ENCODE measurements at regions of chr2 and their contacts with region 1.

Region 1: DNA sequence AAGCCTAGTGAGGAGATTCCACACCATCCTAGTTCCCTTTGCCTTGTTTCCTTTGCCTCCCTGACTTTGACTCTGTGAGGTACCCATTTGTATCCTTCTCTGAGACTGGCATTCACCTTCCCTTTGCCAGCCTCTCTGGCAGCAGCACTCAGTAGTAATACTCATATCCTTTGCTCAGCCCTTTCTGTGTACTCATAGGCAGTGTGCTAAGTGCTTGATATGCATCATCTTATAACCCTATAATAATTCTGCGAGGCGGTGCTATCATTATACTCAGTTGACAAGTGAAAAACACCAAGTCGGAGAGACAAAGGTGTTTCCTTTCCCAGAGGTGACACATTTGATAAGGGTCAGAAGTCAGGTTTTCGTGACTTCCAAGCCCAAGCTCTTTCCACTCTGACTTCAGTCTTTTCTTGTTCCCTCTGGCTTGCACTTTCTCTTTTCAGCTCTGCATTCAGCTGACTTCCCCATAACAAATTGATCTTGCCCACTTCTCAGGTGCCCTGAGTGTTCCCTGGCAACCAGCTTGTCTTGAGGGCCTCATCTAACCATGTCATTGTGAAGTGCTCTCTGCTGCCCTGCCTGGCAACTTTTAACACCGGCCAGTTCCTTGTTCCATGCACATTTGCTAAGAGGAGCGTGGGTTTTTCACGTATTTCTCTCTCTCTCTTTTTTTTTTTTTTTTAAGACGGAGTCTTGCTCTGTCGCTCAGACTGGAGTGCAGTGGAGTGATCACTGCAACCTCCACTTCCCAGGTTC is 94.5 kb upstream of the UPP2 start:
- DNase-seq: no peak
- H3K4me3 Mint-ChIP-seq: no peak overlapping the region
- H3K27ac Mint-ChIP-seq: no peak overlapping the region
- H3K4me1 Mint-ChIP-seq: peaks cover 26% of the 10 kb centered on the region
- H3K27me3 Mint-ChIP-seq: no peaks in the 10 kb centered on the region
- CTCF ChIP-seq: no peak

Region 2: DNA sequence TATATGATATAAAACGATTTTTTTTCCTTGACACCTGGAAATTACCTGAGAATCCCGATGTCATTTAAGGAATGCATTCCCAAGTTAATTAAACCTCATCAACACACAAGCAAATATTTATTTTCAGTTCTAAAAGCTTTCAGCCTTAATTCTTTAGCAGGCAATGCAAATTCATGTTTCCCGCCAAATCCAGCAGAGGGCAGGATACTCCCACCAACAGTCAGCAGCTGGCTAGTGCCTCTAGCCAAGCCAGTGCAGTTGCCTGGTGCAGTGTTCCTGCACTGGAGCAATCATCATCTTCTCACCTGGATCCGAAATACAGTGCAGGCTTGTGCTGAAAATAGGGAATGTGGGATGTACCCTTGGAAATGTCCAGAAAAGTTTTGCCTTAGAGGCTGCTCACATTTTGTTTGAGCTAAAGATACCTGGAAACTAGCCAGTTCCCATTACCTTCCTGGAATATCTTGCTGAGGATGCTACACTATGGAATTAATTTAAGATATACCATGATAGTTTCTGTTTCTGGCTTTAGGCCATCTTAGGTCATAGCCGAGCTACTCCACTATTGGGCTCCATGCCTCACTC is 514.9 kb before region 1 on chr2:
- CTCF ChIA-PET with region 1: interaction called, 5 read pairs
- intact Hi-C with region 1: loop called (anchors 1 kb)
- DNase-seq: peak; percentile 76
- H3K4me3 Mint-ChIP-seq: no peak overlapping the region
- H3K27ac Mint-ChIP-seq: no peak overlapping the region
- H3K4me1 Mint-ChIP-seq: peaks cover 27% of the 10 kb centered on the region
- H3K27me3 Mint-ChIP-seq: peaks cover 13% of the 10 kb centered on the region
- CTCF ChIP-seq: peak; percentile 49

Region 3: GRCh38 chr2:157596992-157597681 is 410.0 kb before region 1 on chr2:
- CTCF ChIA-PET with region 1: no interaction called
- intact Hi-C with region 1: loop called (anchors 10 kb)
- DNase-seq: peak; percentile 73
- H3K4me3 Mint-ChIP-seq: peak overlapping the region; percentile 58
- H3K27ac Mint-ChIP-seq: no peak overlapping the region
- H3K4me1 Mint-ChIP-seq: no peaks in the 10 kb centered on the region
- H3K27me3 Mint-ChIP-seq: peaks cover 15% of the 10 kb centered on the region
- CTCF ChIP-seq: no peak

Region 4: GRCh38 chr2:157777427-157777826 is 229.7 kb before region 1 on chr2:
- CTCF ChIA-PET with region 1: interaction called, 3 read pairs
- intact Hi-C with region 1: loop called (anchors 1 kb)
- DNase-seq: peak; percentile 68
- H3K4me3 Mint-ChIP-seq: no peak overlapping the region
- H3K27ac Mint-ChIP-seq: no peak overlapping the region
- H3K4me1 Mint-ChIP-seq: peaks cover 14% of the 10 kb centered on the region
- H3K27me3 Mint-ChIP-seq: no peaks in the 10 kb centered on the region
- CTCF ChIP-seq: peak; percentile 35

Region 5: DNA sequence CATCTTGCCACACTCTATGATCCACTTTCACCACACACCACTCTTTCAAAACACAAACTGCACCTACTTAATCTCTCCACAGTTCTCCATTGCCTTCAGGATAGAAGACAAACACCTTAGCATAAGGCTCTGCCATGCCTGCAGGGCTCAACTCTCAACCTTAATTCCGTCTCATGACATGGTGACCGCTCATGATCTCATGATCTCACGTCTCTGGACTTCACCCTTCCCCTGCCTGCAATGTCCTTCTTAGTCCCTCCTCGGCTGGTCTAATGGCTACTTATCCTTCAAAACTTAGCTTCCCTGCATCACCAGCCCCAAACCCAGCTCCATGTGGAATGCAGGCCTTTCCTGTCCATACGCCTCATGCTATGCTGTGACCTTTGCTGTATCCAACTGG is 216.4 kb before region 1 on chr2:
- CTCF ChIA-PET with region 1: no interaction called
- intact Hi-C with region 1: no loop called
- DNase-seq: no peak
- H3K4me3 Mint-ChIP-seq: no peak overlapping the region
- H3K27ac Mint-ChIP-seq: no peak overlapping the region
- H3K4me1 Mint-ChIP-seq: peaks cover 41% of the 10 kb centered on the region
- H3K27me3 Mint-ChIP-seq: no peaks in the 10 kb centered on the region
- CTCF ChIP-seq: no peak

Region 6: DNA sequence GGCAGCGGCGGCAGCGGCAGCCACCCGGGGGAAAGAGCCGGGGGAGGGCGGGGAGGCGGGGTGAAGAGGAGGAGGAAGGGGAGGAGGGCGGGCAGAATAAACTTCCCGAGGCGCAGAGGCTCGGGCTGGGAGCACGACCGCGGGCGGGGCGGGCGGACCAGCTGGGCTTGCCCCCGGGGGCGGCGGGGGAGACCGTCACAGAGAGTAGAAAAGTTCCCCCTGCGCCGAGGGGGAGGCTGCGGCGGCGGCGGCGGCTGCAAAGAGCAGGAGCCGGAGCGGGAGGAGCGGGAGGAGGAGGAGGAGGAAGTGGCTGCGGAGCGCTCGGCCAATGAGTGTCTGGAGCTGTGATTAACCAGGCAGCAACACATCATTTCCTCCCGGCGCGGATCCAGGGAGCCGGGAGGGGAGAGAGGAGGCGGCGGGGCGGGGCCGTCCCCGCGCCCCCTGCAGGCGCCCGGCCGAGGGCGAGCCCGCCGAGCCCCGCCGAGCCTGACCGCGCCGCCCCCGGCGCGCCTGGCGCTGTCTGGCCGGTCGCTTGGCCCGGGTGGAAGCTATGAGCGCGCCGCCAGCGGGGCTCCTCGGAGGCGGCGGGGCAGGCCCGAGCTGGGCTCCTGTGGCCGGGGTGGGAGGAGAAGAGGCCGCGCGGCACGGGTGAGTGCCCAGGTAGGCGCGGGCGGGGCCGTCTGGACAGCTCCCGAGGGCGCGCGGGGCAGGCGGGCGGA is 130.9 kb before region 1 on chr2 and contains the start of gene ACVR1:
- CTCF ChIA-PET with region 1: interaction called, 4 read pairs
- intact Hi-C with region 1: loop called (anchors 2 kb)
- DNase-seq: peak; percentile 93
- H3K4me3 Mint-ChIP-seq: peak within 1 kb of the TSS; percentile 91
- H3K27ac Mint-ChIP-seq: peak within 1 kb of the TSS; percentile 62
- H3K4me1 Mint-ChIP-seq: peaks cover 69% of the 10 kb centered on the region
- H3K27me3 Mint-ChIP-seq: no peaks in the 10 kb centered on the region
- CTCF ChIP-seq: no peak
- total RNA-seq, gene ACVR1: 62.0 and 71.3 TPM in 2 replicates